ENCODE measurements at regions of chr10 and their contacts with region 1.

Region 1: DNA sequence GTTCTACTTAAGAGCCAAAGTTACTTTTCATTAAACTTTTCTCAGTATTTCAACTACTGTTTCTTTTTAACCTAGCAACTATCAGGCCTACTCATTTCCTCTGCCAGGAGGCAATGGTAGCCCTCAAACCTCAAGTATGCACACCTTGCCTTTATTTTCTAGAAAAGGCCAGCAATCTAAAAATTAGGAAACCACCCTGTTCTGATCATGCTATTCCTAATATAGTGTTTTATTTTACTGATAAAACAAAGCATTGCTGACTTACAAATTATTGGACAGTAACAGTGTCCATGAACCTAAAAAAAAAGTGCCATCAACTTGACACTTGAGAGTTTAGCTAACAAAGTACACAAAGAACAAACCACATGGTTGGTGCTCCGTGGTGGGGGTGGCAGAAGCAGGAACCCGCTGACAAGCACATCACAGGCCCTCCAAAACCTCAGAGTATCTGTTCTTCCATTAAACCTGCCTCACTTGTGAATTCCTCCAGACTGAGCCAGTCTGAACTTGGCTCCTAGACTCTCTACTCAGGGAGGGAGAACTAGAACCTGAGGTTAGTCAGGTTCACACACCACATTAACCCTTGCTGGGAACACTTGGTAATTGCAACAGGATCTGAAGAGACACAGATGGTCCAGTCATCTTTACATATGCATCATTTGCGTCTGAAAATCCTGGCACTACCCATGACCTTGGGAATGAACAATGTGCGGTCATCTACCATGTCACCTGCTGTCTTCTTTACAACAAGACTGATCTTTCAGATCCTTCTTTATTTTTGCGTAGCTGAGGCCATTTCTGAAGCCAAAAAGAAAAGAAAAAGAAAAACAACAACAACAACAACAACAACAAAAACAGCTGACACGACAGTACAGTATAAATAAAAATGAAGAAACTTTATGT is 31.9 kb downstream of the PIP4K2A start:
- DNase-seq: peak; percentile 77 to 86 (median 81)
- H3K4me3 ChIP-seq: peak overlapping the region in 1 of 2 donors; percentile 15
- H3K4me3 Mint-ChIP-seq: peak overlapping the region; percentile 65 to 92 (median 82)
- H3K27ac ChIP-seq: peak overlapping the region; percentile 81
- H3K27ac Mint-ChIP-seq: peak overlapping the region; percentile 93 to 100 (median 97)
- H3K4me1 ChIP-seq: peaks cover 100% of the 10 kb centered on the region
- H3K4me1 Mint-ChIP-seq: peaks cover 75 to 96% (median 88%) of the 10 kb centered on the region in 4 donors
- H3K27me3 ChIP-seq: no peaks in the 10 kb centered on the region
- H3K27me3 Mint-ChIP-seq: no peaks in the 10 kb centered on the region

Region 2: DNA sequence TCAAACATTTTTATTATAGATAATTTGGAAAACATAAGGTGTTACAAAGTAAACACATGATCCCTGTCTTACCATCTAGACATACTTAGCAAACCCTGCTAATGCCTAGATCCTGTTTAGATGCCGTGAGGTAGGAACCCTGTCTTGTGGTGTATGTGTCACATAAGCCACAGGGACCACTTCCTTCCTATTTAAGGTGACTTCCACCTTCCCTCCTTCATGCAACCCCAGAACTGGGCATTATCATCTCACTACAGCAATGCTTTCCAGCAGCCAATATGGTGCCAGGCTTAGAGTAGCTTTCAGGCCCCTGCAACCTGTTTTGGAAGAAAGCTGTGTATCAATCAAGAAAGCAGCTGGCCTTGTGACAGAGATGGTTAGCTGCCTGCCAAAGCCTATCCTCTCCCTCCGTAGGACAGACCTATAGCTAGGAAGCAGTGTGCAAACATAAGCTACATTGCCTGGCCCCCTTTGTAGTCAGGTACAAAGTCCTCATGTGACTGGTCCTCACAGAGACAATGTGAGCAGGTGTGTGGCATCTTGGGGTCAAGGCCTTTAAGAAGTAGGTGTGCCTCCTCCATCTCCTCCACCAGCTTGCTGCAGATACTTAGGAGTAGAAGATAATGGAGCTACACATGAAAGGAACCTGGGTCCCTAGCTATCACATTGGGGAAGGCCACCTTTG is 190.4 kb before region 1 on chr10:
- CTCF ChIA-PET with region 1: no interaction called
- POLR2A ChIA-PET with region 1: no interaction called
- intact Hi-C with region 1: no loop called
- DNase-seq: peak; percentile 36 to 58 (median 51)
- H3K4me3 ChIP-seq: peak overlapping the region in 1 of 2 donors; percentile 7
- H3K4me3 Mint-ChIP-seq: peak overlapping the region in 4 of 8 donors; percentile 1 to 54 (median 30)
- H3K27ac ChIP-seq: no peak overlapping the region
- H3K27ac Mint-ChIP-seq: peak overlapping the region in 2 of 7 donors; percentile 3 to 61
- H3K4me1 ChIP-seq: peaks cover 16% of the 10 kb centered on the region
- H3K4me1 Mint-ChIP-seq: peaks cover 13 to 25% (median 17%) of the 10 kb centered on the region in 4 donors
- H3K27me3 ChIP-seq: no peaks in the 10 kb centered on the region
- H3K27me3 Mint-ChIP-seq: peaks cover 1 to 11% of the 10 kb centered on the region in 2 donors

Region 3: GRCh38 chr10:22615819-22616499 is 66.5 kb before region 1 on chr10:
- CTCF ChIA-PET with region 1: interaction called, 6 read pairs
- POLR2A ChIA-PET with region 1: interaction called, 24 read pairs
- intact Hi-C with region 1: loop called (anchors 1 kb)
- DNase-seq: peak in 4 of 5 donors; percentile 32 to 81 (median 44)
- H3K4me3 ChIP-seq: peak overlapping the region; percentile 2 to 6
- H3K4me3 Mint-ChIP-seq: peak overlapping the region; percentile 53 to 85 (median 75)
- H3K27ac ChIP-seq: peak overlapping the region; percentile 53
- H3K27ac Mint-ChIP-seq: peak overlapping the region; percentile 87 to 98 (median 95)
- H3K4me1 ChIP-seq: peaks cover 97% of the 10 kb centered on the region
- H3K4me1 Mint-ChIP-seq: peaks cover 78 to 100% (median 91%) of the 10 kb centered on the region in 4 donors
- H3K27me3 ChIP-seq: no peaks in the 10 kb centered on the region
- H3K27me3 Mint-ChIP-seq: no peaks in the 10 kb centered on the region

Region 4: GRCh38 chr10:22630234-22631174 is 52.0 kb before region 1 on chr10:
- CTCF ChIA-PET with region 1: no interaction called
- POLR2A ChIA-PET with region 1: interaction called, 13 read pairs
- intact Hi-C with region 1: no loop called
- DNase-seq: peak; percentile 66 to 86 (median 68)
- H3K4me3 ChIP-seq: peak overlapping the region; percentile 8 to 38
- H3K4me3 Mint-ChIP-seq: peak overlapping the region; percentile 78 to 86 (median 80)
- H3K27ac ChIP-seq: peak overlapping the region; percentile 64
- H3K27ac Mint-ChIP-seq: peak overlapping the region; percentile 87 to 99 (median 96)
- H3K4me1 ChIP-seq: peaks cover 99% of the 10 kb centered on the region
- H3K4me1 Mint-ChIP-seq: peaks cover 82 to 98% (median 94%) of the 10 kb centered on the region in 4 donors
- H3K27me3 ChIP-seq: no peaks in the 10 kb centered on the region
- H3K27me3 Mint-ChIP-seq: no peaks in the 10 kb centered on the region

Region 5: GRCh38 chr10:22648547-22648961 is 33.9 kb before region 1 on chr10:
- CTCF ChIA-PET with region 1: interaction called, 6 read pairs
- POLR2A ChIA-PET with region 1: interaction called, 191 read pairs
- intact Hi-C with region 1: loop called (anchors 2 kb)
- DNase-seq: peak in 1 of 5 donors; percentile 27
- H3K4me3 ChIP-seq: peak overlapping the region in 1 of 2 donors; percentile 44
- H3K4me3 Mint-ChIP-seq: peak overlapping the region; percentile 67 to 91 (median 78)
- H3K27ac ChIP-seq: peak overlapping the region; percentile 61
- H3K27ac Mint-ChIP-seq: peak overlapping the region; percentile 85 to 96 (median 95)
- H3K4me1 ChIP-seq: peaks cover 100% of the 10 kb centered on the region
- H3K4me1 Mint-ChIP-seq: peaks cover 82 to 96% (median 90%) of the 10 kb centered on the region in 4 donors
- H3K27me3 ChIP-seq: no peaks in the 10 kb centered on the region
- H3K27me3 Mint-ChIP-seq: no peaks in the 10 kb centered on the region

Region 6: DNA sequence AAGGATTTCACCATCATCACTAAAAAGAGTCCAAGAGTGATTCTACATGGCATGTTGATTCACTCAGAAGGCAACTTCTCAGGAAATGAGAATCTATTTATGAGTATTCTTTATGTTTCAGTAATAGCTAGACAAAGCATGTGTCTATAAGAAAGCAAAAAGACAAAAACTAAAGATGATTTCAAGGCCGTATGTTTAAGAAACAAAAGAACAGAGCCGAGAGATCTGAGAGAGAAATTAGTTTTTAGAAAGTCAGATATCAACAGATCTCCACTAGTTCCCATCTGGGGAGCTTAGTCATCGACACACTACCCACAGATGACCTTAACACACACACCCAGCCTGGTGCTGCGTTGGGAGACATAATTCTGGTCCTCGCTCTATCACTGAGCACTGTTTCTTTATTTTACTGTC is 10.9 kb after region 1 on chr10:
- CTCF ChIA-PET with region 1: interaction called, 9 read pairs
- POLR2A ChIA-PET with region 1: interaction called, 13 read pairs
- intact Hi-C with region 1: loop called (anchors 1 kb)
- DNase-seq: peak in 1 of 5 donors; percentile 68
- H3K4me3 ChIP-seq: no peak overlapping the region
- H3K4me3 Mint-ChIP-seq: peak overlapping the region; percentile 31 to 74 (median 62)
- H3K27ac ChIP-seq: peak overlapping the region; percentile 29
- H3K27ac Mint-ChIP-seq: peak overlapping the region; percentile 85 to 97 (median 88)
- H3K4me1 ChIP-seq: peaks cover 99% of the 10 kb centered on the region
- H3K4me1 Mint-ChIP-seq: peaks cover 71 to 95% (median 86%) of the 10 kb centered on the region in 4 donors
- H3K27me3 ChIP-seq: no peaks in the 10 kb centered on the region
- H3K27me3 Mint-ChIP-seq: no peaks in the 10 kb centered on the region

Region 7: DNA sequence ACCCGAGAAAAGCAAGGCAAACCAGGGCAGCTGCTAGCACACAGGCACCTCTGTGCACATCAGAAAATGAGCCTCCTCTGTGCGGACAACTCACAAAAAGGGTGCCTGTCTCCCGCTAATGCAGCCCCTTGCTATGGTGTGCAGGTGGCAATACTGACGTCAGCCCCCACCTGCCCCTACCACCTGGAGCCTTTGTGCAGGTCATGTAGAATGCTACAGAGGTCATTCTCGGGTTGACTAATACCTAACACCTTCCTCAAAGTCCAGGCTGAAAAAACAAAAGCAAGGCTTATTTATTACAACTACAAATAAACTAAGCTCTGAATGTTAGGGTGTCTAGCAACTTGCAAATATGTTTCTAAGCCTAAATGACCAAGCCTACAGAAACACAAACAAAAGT is 18.0 kb after region 1 on chr10:
- CTCF ChIA-PET with region 1: interaction called, 5 read pairs
- POLR2A ChIA-PET with region 1: interaction called, 28 read pairs
- intact Hi-C with region 1: loop called (anchors 1 kb)
- DNase-seq: peak in 1 of 5 donors; percentile 29
- H3K4me3 ChIP-seq: no peak overlapping the region
- H3K4me3 Mint-ChIP-seq: peak overlapping the region in 4 of 8 donors; percentile 4 to 66 (median 38)
- H3K27ac ChIP-seq: no peak overlapping the region
- H3K27ac Mint-ChIP-seq: peak overlapping the region; percentile 30 to 90 (median 81)
- H3K4me1 ChIP-seq: peaks cover 99% of the 10 kb centered on the region
- H3K4me1 Mint-ChIP-seq: peaks cover 77 to 93% (median 88%) of the 10 kb centered on the region in 4 donors
- H3K27me3 ChIP-seq: no peaks in the 10 kb centered on the region
- H3K27me3 Mint-ChIP-seq: no peaks in the 10 kb centered on the region

Region 8: GRCh38 chr10:22714479-22715289 is 32.2 kb after region 1 on chr10 and contains the start of gene PIP4K2A:
- CTCF ChIA-PET with region 1: interaction called, 4 read pairs
- POLR2A ChIA-PET with region 1: interaction called, 64 read pairs
- intact Hi-C with region 1: loop called (anchors 1 kb)
- DNase-seq: peak; percentile 71 to 84 (median 81)
- H3K4me3 ChIP-seq: peak within 1 kb of the TSS; percentile 77 to 79
- H3K4me3 Mint-ChIP-seq: peak within 1 kb of the TSS; percentile 87 to 98 (median 96)
- H3K27ac ChIP-seq: peak within 1 kb of the TSS; percentile 88
- H3K27ac Mint-ChIP-seq: peak within 1 kb of the TSS; percentile 88 to 96 (median 92)
- H3K4me1 ChIP-seq: peaks cover 34% of the 10 kb centered on the region
- H3K4me1 Mint-ChIP-seq: peaks cover 28 to 40% (median 31%) of the 10 kb centered on the region in 4 donors
- H3K27me3 ChIP-seq: no peaks in the 10 kb centered on the region
- H3K27me3 Mint-ChIP-seq: no peaks in the 10 kb centered on the region
- total RNA-seq, gene PIP4K2A: 171 to 179 TPM

Region 9: GRCh38 chr10:22851865-22852239 is 169.4 kb after region 1 on chr10:
- CTCF ChIA-PET with region 1: no interaction called
- POLR2A ChIA-PET with region 1: no interaction called
- intact Hi-C with region 1: no loop called
- DNase-seq: no peak
- H3K4me3 ChIP-seq: no peak overlapping the region
- H3K4me3 Mint-ChIP-seq: no peak overlapping the region
- H3K27ac ChIP-seq: no peak overlapping the region
- H3K27ac Mint-ChIP-seq: no peak overlapping the region
- H3K4me1 ChIP-seq: no peaks in the 10 kb centered on the region
- H3K4me1 Mint-ChIP-seq: peaks cover 5 to 9% (median 6%) of the 10 kb centered on the region in 4 donors
- H3K27me3 ChIP-seq: no peaks in the 10 kb centered on the region
- H3K27me3 Mint-ChIP-seq: peaks cover 2 to 3% of the 10 kb centered on the region in 2 donors

Measured in CD4-positive, alpha-beta memory T cell (primary cell).